OCI-LY7 (cell line): ENCODE measurements at regions of chr2 and their contacts with region 1.

Region 1: DNA sequence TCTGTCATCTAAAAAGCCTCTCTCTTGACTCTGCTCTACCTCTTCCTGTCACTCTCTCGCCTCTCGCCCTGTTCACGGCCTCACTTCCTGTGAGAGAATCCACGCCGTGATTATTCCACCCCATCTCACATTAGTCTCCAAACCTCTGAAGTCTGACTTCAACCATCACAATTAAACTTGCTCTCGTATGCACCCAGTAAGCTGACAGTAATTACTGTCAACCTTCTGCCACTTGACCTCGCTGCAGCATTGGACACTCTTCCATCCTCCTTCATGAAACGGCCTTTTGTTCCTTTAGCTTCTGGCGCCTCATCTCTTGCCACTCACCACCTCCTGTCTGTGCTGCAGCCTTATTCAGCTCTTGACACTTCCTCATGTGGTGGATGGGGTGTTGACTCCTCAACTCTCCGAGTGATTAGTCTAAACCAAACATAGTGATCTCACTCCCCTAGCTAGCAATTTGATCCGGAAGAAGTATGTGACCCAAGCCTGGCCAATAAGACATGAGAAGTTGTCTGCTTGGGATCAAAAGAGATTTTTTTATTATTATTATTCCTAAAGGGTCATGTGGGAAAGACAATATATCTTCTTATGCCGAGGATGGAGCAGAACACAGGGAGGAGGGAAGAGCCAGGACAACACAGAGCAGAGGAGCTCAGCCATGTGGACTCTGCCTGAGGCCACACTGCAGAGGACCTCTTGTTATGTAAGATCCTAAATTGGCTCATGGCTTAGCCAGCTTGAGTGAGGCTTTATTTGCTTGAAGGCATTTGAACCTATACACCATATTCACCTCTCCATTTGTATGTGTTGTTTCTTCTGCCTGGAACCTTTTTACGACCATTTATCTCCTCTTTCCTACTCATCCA is 38.4 kb upstream of the MYO1B start:
- DNase-seq: no peak
- H3K4me3 ChIP-seq: no peak overlapping the region
- H3K27ac ChIP-seq: no peak overlapping the region
- H3K4me1 ChIP-seq: no peaks in the 10 kb centered on the region
- CTCF ChIP-seq: no peak

Region 2: DNA sequence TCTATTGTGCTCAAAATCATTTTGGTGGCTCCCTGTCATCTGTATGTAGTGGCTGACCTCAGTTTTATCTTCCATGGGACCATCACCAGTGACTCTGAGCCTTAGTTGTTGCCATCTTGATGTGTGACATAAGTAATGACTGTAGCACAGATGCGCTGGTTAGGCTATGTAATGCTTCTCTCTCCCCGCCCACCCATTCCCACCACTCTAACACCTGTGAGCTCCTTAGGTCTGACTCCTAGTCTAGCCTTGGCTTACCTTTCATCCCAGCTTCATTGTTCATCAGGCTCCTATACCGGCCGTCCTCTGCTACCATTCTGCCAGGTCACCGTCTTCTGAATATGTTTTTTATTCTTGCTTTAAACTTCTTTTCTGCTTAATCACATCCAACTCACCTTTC is 55.6 kb after region 1 on chr2:
- CTCF ChIA-PET with region 1: interaction called, 10 read pairs
- POLR2A ChIA-PET with region 1: no interaction called
- intact Hi-C with region 1: no loop called
- DNase-seq: no peak
- H3K4me3 ChIP-seq: no peak overlapping the region
- H3K27ac ChIP-seq: no peak overlapping the region
- H3K4me1 ChIP-seq: no peaks in the 10 kb centered on the region
- CTCF ChIP-seq: no peak